Adrenal gland (tissue), 19 donors: ENCODE measurements at regions of chr5 and their contacts with region 1.

Region 1: DNA sequence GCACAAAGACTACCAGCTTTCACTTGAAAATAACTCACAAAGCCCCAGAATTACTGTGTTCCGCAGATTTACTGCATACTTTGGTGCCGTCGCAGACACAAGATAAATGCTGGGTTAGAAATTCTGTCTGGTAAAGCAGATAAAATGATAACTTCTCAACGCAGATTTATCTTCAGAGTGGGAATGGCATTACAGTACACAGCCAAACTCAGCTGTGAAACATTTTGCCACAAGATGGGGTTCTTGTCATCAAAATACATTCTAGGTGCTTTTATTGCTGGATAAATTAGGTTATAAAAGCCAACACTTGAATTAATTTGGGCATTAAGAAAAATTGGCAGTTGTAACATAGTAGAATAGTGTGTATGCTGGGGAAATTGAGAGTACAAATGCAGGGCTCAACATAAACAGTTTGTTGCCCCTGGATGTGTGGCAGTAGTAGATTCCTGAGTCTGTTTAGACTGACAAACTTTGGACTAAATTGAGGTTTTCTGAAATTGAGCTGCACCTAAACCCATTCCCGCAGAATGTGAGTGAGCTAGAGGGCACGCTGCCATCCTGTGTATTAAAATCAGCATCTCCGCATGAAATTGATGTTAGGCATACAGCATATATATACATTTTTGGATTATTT is 61.1 kb downstream of the LMNB1 start:
- DNase-seq: peak in 1 of 7 donors; percentile 27
- H3K4me3 ChIP-seq: no peak overlapping the region
- H3K27ac ChIP-seq: no peak overlapping the region
- H3K4me1 ChIP-seq: no peaks in the 10 kb centered on the region
- H3K27me3 ChIP-seq: no peaks in the 10 kb centered on the region
- CTCF ChIP-seq: peak; percentile 20 to 69 (median 58)
- POLR2A ChIP-seq: no peak

Region 2: GRCh38 chr5:126544087-126544740 is 293.8 kb before region 1 on chr5:
- intact Hi-C with region 1: no loop called
- DNase-seq: peak in 6 of 7 donors; percentile 24 to 69 (median 38)
- H3K4me3 ChIP-seq: no peak overlapping the region
- H3K27ac ChIP-seq: no peak overlapping the region
- H3K4me1 ChIP-seq: peaks cover 0 to 2% of the 10 kb centered on the region in 2 donors
- H3K27me3 ChIP-seq: no peaks in the 10 kb centered on the region
- CTCF ChIP-seq: peak; percentile 38 to 48 (median 40)
- POLR2A ChIP-seq: no peak

Region 3: DNA sequence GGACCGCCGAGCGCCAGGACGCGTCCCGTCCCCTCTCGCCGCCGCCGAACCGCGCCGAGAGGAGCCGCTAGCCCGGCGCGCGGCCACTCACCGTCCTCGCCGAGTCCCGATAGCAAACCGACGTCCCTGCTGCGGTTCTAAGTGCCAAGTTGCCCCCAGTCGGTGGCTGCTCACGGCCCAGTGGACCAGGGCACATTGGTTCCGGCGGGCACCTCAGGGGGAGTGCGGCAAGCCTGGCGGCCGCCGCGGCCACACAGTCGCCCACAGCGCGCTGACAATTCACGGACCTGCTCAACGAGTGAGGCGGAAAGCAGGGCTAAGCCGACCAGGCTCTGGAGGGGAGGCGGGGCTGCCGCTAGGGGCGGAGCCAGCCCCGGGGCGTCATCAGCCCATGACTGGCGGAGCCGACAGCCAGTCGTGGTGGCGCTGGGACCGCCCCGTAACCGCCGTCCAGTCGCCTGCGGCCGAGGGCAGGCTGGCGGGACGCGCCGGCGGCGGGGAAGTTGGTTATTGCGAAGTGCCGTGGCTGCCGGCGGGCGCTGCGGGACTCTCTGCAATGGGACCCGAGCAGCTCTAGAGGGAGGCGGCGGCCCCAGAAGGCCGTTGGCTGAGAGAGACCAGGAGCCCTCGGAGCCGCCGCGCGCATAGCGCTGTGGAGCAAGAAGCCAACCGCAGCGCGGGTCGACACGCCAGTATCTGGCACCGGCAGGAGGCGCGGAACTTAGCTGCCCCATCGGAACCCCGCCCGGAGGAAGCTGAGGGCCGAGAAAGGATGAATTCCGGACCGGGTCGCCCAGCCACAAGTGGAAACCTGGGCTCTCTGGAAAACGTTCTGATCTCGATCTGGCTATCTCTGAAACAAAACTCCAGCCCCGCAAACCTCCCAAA is 192.5 kb after region 1 on chr5 and contains the start of gene MARCHF3:
- intact Hi-C with region 1: loop called in 1 of 2 experiments (anchors 10 kb)
- DNase-seq: peak; percentile 95 to 98 (median 96)
- H3K4me3 ChIP-seq: peak within 1 kb of the TSS; percentile 41 to 85 (median 76)
- H3K27ac ChIP-seq: peak within 1 kb of the TSS; percentile 88 to 94 (median 92)
- H3K4me1 ChIP-seq: peaks cover 10 to 33% of the 10 kb centered on the region in 2 donors
- H3K27me3 ChIP-seq: no peaks in the 10 kb centered on the region
- CTCF ChIP-seq: peak in 5 of 6 experiments; percentile 11 to 35 (median 30)
- POLR2A ChIP-seq: peak; percentile 95 to 99
- total RNA-seq, gene MARCHF3: 8.0 to 48.9 (median 12.8) TPM

Region 4: GRCh38 chr5:127313847-127314473 is 475.9 kb after region 1 on chr5:
- intact Hi-C with region 1: loop called in 1 of 2 experiments (anchors 5 kb)
- DNase-seq: peak; percentile 48 to 85 (median 66)
- H3K4me3 ChIP-seq: no peak overlapping the region
- H3K27ac ChIP-seq: no peak overlapping the region
- H3K4me1 ChIP-seq: no peaks in the 10 kb centered on the region
- H3K27me3 ChIP-seq: no peaks in the 10 kb centered on the region
- CTCF ChIP-seq: peak; percentile 42 to 82 (median 66)
- POLR2A ChIP-seq: no peak